B cell (primary cell): ENCODE measurements at regions of chrX and their contacts with region 1.

Region 1: DNA sequence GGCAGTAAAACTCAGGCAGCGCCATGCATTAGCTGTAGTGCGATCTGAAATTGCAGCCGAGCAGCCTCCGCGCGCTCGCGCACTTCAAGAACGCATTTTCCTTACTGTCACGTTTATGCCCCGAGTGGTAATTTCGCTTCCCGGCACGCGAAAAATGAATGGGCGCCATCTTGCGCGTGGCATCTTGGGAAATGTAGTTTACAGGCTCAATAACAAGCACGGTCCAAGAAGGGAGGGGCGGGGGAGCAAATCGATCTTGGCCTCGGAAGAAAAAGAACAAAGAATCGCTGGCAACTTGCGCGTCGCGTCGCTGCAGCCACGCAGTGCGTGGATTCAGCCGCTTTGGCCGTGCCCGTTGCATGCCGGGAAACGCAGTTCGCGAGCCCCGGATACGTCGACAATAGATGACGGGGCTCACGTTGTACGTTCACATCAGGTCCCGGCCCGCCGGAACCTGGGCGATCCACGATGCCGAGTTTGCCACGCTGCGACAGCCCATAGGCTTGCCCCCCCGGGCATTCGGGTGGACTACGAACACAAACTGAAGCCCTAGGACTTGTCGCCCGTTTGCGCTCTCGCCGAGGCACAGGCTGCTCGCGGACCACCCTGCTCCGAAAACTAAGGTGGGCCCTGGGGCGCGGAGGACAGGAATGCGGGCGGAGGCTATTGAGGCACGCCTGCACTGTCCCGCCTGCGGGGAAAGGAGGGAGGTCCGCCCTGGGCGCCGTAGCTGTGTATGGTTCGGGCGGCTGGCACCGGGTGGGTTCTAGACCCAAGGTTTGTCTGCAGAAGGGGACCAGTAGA is at the start of gene FTSJ1:
- DNase-seq: peak; percentile 94
- ATAC-seq: peak; percentile 87
- H3K4me3 ChIP-seq: peak within 1 kb of the TSS; percentile 70 to 83 (median 76)
- H3K4me3 Mint-ChIP-seq: peak within 1 kb of the TSS; percentile 86
- H3K27ac ChIP-seq: peak within 1 kb of the TSS; percentile 59 to 78
- H3K27ac Mint-ChIP-seq: peak within 1 kb of the TSS; percentile 78
- H3K4me1 ChIP-seq: peaks cover 4 to 19% of the 10 kb centered on the region in 2 donors
- H3K4me1 Mint-ChIP-seq: peaks cover 26% of the 10 kb centered on the region
- H3K27me3 ChIP-seq: no peaks in the 10 kb centered on the region
- H3K27me3 Mint-ChIP-seq: no peaks in the 10 kb centered on the region
- CTCF ChIP-seq: no peak
- total RNA-seq, gene FTSJ1: 36.6 and 37.7 TPM in 2 replicates

Region 2: GRCh38 chrX:47836164-47837072 is 639.6 kb before region 1 on chrX and contains the start of gene ZNF81:
- CTCF ChIA-PET with region 1: interaction called, 3 read pairs
- POLR2A ChIA-PET with region 1: no interaction called
- intact Hi-C with region 1: loop called (anchors 2 kb)
- DNase-seq: peak; percentile 93
- ATAC-seq: peak; percentile 97
- H3K4me3 ChIP-seq: peak within 1 kb of the TSS; percentile 66 to 76 (median 70)
- H3K4me3 Mint-ChIP-seq: peak within 1 kb of the TSS; percentile 99
- H3K27ac ChIP-seq: peak within 1 kb of the TSS; percentile 64 to 73
- H3K27ac Mint-ChIP-seq: peak within 1 kb of the TSS; percentile 98
- H3K4me1 ChIP-seq: peaks cover 9% of the 10 kb centered on the region in 2 donors
- H3K4me1 Mint-ChIP-seq: peaks cover 24% of the 10 kb centered on the region
- H3K27me3 ChIP-seq: no peaks in the 10 kb centered on the region
- H3K27me3 Mint-ChIP-seq: no peaks in the 10 kb centered on the region
- CTCF ChIP-seq: no peak
- total RNA-seq, gene ZNF81: 15.3 and 17.7 TPM in 2 replicates

Region 3: DNA sequence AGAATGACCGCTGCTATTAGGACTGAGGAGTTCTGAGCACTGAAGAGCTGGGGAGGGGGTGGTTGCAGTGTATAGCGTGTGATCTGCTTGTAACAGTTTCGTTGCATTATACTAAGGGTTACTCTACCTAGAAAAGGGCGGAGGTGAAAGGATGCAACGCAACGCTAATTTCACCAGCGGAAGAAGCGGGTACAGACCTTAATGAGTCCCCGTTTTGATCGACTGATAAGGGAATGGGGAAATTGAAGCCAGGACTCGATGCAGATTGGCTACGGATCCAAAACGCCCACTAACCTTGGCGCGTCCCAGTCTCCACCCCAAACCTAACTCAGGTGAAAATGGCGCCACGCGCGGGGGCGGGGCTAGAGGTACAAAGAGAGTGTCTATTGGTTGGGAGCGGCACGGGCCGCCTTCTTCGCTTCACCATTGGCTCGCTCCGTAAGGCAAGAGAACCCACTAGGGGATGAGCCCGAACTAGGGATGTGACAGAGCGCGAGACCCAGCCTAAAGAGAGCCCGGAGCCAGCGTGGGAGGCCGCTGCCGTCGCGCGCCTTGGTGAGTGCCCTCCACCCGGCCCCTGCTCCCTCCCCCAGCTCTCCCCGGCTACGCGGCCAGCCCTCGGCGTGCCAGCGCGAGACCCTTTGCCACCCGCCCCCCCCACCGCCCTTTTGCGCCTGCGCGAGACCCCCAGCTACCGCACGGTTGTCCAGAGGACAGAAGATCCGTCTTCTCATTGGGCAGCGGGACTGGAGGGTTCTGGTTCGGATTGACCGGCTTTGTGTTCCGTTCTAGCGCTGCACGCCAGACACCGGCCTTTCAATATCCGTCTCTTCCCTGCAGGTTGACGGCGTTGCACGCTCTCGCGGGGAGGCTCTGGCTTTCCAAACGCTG is 45.6 kb after region 1 on chrX and contains the start of gene EBP:
- CTCF ChIA-PET with region 1: interaction called, 3 read pairs
- POLR2A ChIA-PET with region 1: no interaction called
- intact Hi-C with region 1: loop called (anchors 5 kb)
- DNase-seq: peak; percentile 94
- ATAC-seq: peak; percentile 97
- H3K4me3 ChIP-seq: peak within 1 kb of the TSS; percentile 47 to 72 (median 62)
- H3K4me3 Mint-ChIP-seq: peak within 1 kb of the TSS; percentile 87
- H3K27ac ChIP-seq: peak within 1 kb of the TSS; percentile 74
- H3K27ac Mint-ChIP-seq: peak within 1 kb of the TSS; percentile 89
- H3K4me1 ChIP-seq: peaks cover 12 to 19% of the 10 kb centered on the region in 2 donors
- H3K4me1 Mint-ChIP-seq: peaks cover 12% of the 10 kb centered on the region
- H3K27me3 ChIP-seq: no peaks in the 10 kb centered on the region
- H3K27me3 Mint-ChIP-seq: no peaks in the 10 kb centered on the region
- CTCF ChIP-seq: no peak
- total RNA-seq, gene EBP: 27.9 and 33.4 TPM in 2 replicates

Region 4: GRCh38 chrX:48597353-48598264 is 121.6 kb after region 1 on chrX and contains the start of gene WDR13:
- CTCF ChIA-PET with region 1: no interaction called
- POLR2A ChIA-PET with region 1: no interaction called
- intact Hi-C with region 1: loop called (anchors 1 kb)
- DNase-seq: peak; percentile 91
- ATAC-seq: peak; percentile 76
- H3K4me3 ChIP-seq: peak within 1 kb of the TSS; percentile 55 to 93 (median 75)
- H3K4me3 Mint-ChIP-seq: peak within 1 kb of the TSS; percentile 98
- H3K27ac ChIP-seq: peak within 1 kb of the TSS; percentile 95 to 98
- H3K27ac Mint-ChIP-seq: peak within 1 kb of the TSS; percentile 100
- H3K4me1 ChIP-seq: peaks cover 0 to 12% of the 10 kb centered on the region in 2 donors
- H3K4me1 Mint-ChIP-seq: peaks cover 8% of the 10 kb centered on the region
- H3K27me3 ChIP-seq: no peaks in the 10 kb centered on the region
- H3K27me3 Mint-ChIP-seq: no peaks in the 10 kb centered on the region
- CTCF ChIP-seq: no peak
- total RNA-seq, gene WDR13: 85.1 and 94.6 TPM in 2 replicates

Region 5: DNA sequence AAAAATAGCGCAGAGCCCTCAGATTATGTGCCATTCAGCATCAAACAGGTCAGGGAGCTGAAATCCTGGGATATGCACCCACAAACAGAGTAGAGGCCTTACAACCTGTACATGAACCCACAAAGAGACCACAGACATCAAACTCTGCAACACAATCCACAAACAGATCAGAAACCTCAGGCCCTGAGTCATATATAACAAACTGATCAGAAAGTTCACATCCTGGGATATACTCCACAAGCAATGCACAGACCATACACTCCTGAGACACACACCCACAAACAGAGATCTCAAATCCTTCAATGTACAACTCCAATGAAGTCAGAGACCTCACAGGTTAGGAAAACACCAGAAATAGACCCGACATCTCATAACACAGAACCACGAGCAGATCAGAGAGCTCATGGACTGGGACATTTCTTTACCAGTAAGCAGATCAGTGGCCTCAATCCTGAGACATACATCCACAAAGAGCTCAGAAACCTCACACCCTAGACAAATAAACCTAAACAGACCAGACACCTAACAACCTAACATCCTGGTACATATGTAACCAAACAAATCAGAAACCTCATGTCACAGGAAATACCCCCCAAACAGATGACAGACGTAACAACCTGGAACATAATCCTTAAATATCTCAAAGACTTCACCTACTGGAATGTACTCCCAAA is 244.7 kb after region 1 on chrX:
- CTCF ChIA-PET with region 1: no interaction called
- POLR2A ChIA-PET with region 1: no interaction called
- intact Hi-C with region 1: no loop called
- DNase-seq: no peak
- ATAC-seq: no peak
- H3K4me3 ChIP-seq: no peak overlapping the region
- H3K4me3 Mint-ChIP-seq: no peak overlapping the region
- H3K27ac ChIP-seq: no peak overlapping the region
- H3K27ac Mint-ChIP-seq: no peak overlapping the region
- H3K4me1 ChIP-seq: no peaks in the 10 kb centered on the region
- H3K4me1 Mint-ChIP-seq: no peaks in the 10 kb centered on the region
- H3K27me3 ChIP-seq: no peaks in the 10 kb centered on the region
- H3K27me3 Mint-ChIP-seq: no peaks in the 10 kb centered on the region
- CTCF ChIP-seq: no peak

Region 6: GRCh38 chrX:48801280-48802088 is 325.5 kb after region 1 on chrX and contains the start of gene HDAC6:
- CTCF ChIA-PET with region 1: no interaction called
- POLR2A ChIA-PET with region 1: no interaction called
- intact Hi-C with region 1: loop called (anchors 5 kb)
- DNase-seq: peak; percentile 97
- ATAC-seq: peak; percentile 80
- H3K4me3 ChIP-seq: peak within 1 kb of the TSS; percentile 65 to 82 (median 76)
- H3K4me3 Mint-ChIP-seq: peak within 1 kb of the TSS; percentile 96
- H3K27ac ChIP-seq: peak within 1 kb of the TSS; percentile 95 to 96
- H3K27ac Mint-ChIP-seq: peak within 1 kb of the TSS; percentile 98
- H3K4me1 ChIP-seq: peaks cover 4 to 16% of the 10 kb centered on the region in 2 donors
- H3K4me1 Mint-ChIP-seq: peaks cover 14% of the 10 kb centered on the region
- H3K27me3 ChIP-seq: no peaks in the 10 kb centered on the region
- H3K27me3 Mint-ChIP-seq: no peaks in the 10 kb centered on the region
- CTCF ChIP-seq: no peak
- total RNA-seq, gene HDAC6: 168 and 170 TPM in 2 replicates

Region 7: GRCh38 chrX:48911412-48912182 is 435.6 kb after region 1 on chrX and contains the start of gene SLC35A2:
- CTCF ChIA-PET with region 1: no interaction called
- POLR2A ChIA-PET with region 1: no interaction called
- intact Hi-C with region 1: no loop called
- DNase-seq: peak; percentile 90
- ATAC-seq: peak; percentile 76
- H3K4me3 ChIP-seq: peak within 1 kb of the TSS; percentile 60 to 78 (median 66)
- H3K4me3 Mint-ChIP-seq: peak within 1 kb of the TSS; percentile 86
- H3K27ac ChIP-seq: peak within 1 kb of the TSS; percentile 86 to 90
- H3K27ac Mint-ChIP-seq: peak within 1 kb of the TSS; percentile 88
- H3K4me1 ChIP-seq: peaks cover 28 to 49% of the 10 kb centered on the region in 2 donors
- H3K4me1 Mint-ChIP-seq: peaks cover 48% of the 10 kb centered on the region
- H3K27me3 ChIP-seq: no peaks in the 10 kb centered on the region
- H3K27me3 Mint-ChIP-seq: no peaks in the 10 kb centered on the region
- CTCF ChIP-seq: no peak
- total RNA-seq, gene SLC35A2: 19.1 and 24.1 TPM in 2 replicates